Activated CD4-positive, alpha-beta memory T cell treated with anti-CD3 and anti-CD28 coated beads, Interleukin-2, amount 10 ng/mL, durations not matched to agents 7 days and 5 days (primary cell): ENCODE measurements at regions of chr6 and their contacts with region 1.

Region 1: GRCh38 chr6:139219271-139219729 is 72.5 kb downstream of the TXLNB start:
- DNase-seq: peak; percentile 83
- H3K4me3 Mint-ChIP-seq: no peak overlapping the region
- H3K27ac Mint-ChIP-seq: peak overlapping the region; percentile 59
- H3K4me1 Mint-ChIP-seq: peaks cover 13% of the 10 kb centered on the region
- H3K27me3 Mint-ChIP-seq: no peaks in the 10 kb centered on the region

Region 2: GRCh38 chr6:139081471-139081870 is 137.8 kb before region 1 on chr6:
- CTCF ChIA-PET with region 1: no interaction called
- POLR2A ChIA-PET with region 1: no interaction called
- DNase-seq: no peak
- H3K4me3 Mint-ChIP-seq: no peak overlapping the region
- H3K27ac Mint-ChIP-seq: no peak overlapping the region
- H3K4me1 Mint-ChIP-seq: no peaks in the 10 kb centered on the region
- H3K27me3 Mint-ChIP-seq: no peaks in the 10 kb centered on the region

Region 3: GRCh38 chr6:139134817-139135581 is 84.3 kb before region 1 on chr6 and contains the start of gene HECA:
- CTCF ChIA-PET with region 1: interaction called, 11 read pairs
- POLR2A ChIA-PET with region 1: no interaction called
- DNase-seq: peak; percentile 99
- H3K4me3 Mint-ChIP-seq: peak within 1 kb of the TSS; percentile 82
- H3K27ac Mint-ChIP-seq: peak within 1 kb of the TSS; percentile 96
- H3K4me1 Mint-ChIP-seq: peaks cover 57% of the 10 kb centered on the region
- H3K27me3 Mint-ChIP-seq: no peaks in the 10 kb centered on the region
- total RNA-seq, gene HECA: 78.9 to 81.7 TPM

Region 4: DNA sequence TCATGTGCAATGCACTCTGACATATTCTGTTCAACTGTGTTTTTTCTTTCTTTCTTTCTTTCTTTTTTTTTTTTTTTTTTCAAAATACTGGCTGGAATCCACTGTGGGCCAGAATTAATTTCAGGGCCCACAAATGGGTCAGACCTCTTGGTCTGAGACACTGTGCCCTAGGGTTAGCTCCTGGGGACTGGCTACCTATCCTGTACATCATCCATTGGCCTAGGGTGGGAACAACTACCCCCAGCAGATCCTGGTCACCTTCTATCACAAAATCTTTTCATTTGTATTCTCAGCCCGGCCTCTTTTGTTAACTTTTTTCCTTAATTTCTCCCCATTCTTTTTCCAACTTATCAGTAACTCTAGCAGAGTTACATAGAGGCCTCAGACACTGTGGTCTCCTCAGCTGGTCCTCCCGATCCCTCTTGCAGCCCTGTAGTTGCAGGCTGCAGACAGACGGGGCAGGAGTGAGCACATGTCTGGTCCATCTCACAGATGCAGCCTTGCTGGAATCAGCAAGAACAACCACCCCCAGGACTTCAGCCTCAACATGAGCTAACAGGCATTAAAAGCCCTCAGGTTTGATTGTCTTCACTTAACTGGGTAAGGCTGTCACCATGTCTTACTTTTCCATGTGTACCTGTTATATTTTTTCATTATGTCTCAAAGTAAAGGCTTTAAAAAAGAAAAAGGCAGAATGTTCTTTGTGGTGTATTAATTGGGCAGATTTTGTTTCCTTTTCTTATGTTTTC is 31.2 kb after region 1 on chr6:
- CTCF ChIA-PET with region 1: interaction called, 47 read pairs
- POLR2A ChIA-PET with region 1: interaction called, 15 read pairs
- DNase-seq: peak; percentile 78
- H3K4me3 Mint-ChIP-seq: peak overlapping the region; percentile 70
- H3K27ac Mint-ChIP-seq: peak overlapping the region; percentile 93
- H3K4me1 Mint-ChIP-seq: peaks cover 44% of the 10 kb centered on the region
- H3K27me3 Mint-ChIP-seq: no peaks in the 10 kb centered on the region

Region 5: DNA sequence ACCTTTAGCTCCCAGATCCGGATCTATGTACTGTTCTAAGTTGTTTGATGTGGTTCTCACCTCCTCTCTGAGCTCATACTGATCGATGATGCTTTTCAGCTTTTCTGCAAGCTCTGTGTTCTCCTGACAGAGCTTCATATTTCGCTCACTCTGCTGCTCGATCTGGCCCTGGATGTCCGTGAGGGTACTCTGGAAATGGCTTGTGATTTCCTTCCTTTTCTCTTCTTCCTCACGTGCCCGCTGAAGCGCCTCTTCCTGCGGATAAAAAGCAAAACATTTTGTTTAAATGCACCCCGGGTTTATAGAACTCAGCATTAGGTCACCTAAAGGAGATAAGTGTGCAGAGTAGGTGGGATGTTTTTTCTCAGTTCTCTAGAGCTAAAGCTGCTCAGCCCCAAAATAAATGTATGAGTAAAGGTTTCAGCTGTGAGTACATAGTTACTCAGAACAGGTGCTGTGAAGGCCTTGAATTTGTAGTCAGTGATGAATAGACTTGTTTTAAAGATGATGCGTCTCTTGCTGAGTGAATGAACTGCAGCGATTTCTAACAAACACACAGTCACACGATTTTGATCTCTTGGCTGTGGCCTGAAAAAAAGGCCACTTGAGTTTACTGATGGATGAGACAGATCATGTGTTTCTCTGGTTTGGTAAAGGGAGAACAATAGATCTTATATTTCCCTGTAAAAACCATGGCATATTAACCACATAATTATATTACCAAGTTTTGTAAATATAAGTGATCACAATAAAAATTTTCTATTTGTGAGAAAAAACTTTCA is 43.4 kb after region 1 on chr6:
- CTCF ChIA-PET with region 1: interaction called, 12 read pairs
- POLR2A ChIA-PET with region 1: interaction called, 6 read pairs
- DNase-seq: peak; percentile 32
- H3K4me3 Mint-ChIP-seq: peak overlapping the region; percentile 46
- H3K27ac Mint-ChIP-seq: peak overlapping the region; percentile 74
- H3K4me1 Mint-ChIP-seq: peaks cover 26% of the 10 kb centered on the region
- H3K27me3 Mint-ChIP-seq: no peaks in the 10 kb centered on the region

Region 6: GRCh38 chr6:139323511-139324300 is 104.4 kb after region 1 on chr6:
- CTCF ChIA-PET with region 1: interaction called, 15 read pairs
- POLR2A ChIA-PET with region 1: interaction called, 3 read pairs
- DNase-seq: peak; percentile 81
- H3K4me3 Mint-ChIP-seq: peak overlapping the region; percentile 70
- H3K27ac Mint-ChIP-seq: peak overlapping the region; percentile 96
- H3K4me1 Mint-ChIP-seq: peaks cover 31% of the 10 kb centered on the region
- H3K27me3 Mint-ChIP-seq: no peaks in the 10 kb centered on the region

Region 7: DNA sequence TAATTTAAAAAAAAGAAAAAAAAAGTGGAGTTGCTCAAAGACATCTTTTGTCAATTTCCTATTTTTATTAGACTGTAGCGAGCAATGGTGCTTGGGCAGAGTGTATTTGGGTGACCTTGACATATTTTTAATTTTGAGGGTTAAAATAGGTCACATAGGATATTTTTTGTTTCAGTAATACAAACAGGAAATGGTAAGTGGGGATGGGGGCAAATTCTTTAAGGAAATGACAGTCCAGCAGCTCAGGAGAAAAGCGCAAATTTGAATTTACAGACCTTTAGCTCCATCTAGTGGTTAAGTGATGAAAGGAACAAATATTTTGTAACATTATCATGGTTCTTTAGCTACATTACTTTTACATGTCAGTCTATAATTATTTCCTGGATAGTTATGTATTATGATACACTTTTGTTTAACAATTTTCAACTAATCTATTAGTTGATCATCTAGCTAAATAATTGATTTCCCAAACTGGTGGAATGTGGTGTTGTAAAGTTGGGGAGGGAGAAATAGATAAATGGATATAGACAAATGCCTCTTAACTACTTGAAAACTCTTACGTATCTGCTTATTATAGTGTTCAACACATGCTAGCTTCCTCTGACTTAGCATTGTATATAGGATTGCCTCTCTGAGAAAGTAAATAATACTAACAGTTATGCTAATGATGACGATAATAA is 145.1 kb after region 1 on chr6:
- CTCF ChIA-PET with region 1: interaction called, 170 read pairs
- POLR2A ChIA-PET with region 1: interaction called, 17 read pairs
- DNase-seq: no peak
- H3K4me3 Mint-ChIP-seq: no peak overlapping the region
- H3K27ac Mint-ChIP-seq: no peak overlapping the region
- H3K4me1 Mint-ChIP-seq: peaks cover 41% of the 10 kb centered on the region
- H3K27me3 Mint-ChIP-seq: no peaks in the 10 kb centered on the region